Activated naive CD8-positive, alpha-beta T cell treated with anti-CD3 and anti-CD28 coated beads, Interleukin-2, amount 10 ng/mL, durations not matched to agents 7 days and 5 days (primary cell): ENCODE measurements at regions of chr2 and their contacts with region 1.

Region 1: GRCh38 chr2:127081826-127082633 is 24.9 kb downstream of the BIN1 start:
- DNase-seq: peak; percentile 87
- ATAC-seq: peak; percentile 75
- H3K4me3 Mint-ChIP-seq: peak overlapping the region; percentile 94
- H3K27ac Mint-ChIP-seq: peak overlapping the region; percentile 99
- H3K4me1 Mint-ChIP-seq: peaks cover 73% of the 10 kb centered on the region
- H3K27me3 Mint-ChIP-seq: no peaks in the 10 kb centered on the region

Region 2: GRCh38 chr2:127067620-127068350 is 14.2 kb before region 1 on chr2:
- POLR2A ChIA-PET with region 1: interaction called, 14 read pairs
- DNase-seq: peak; percentile 78
- ATAC-seq: peak; percentile 62
- H3K4me3 Mint-ChIP-seq: no peak overlapping the region
- H3K27ac Mint-ChIP-seq: peak overlapping the region; percentile 52
- H3K4me1 Mint-ChIP-seq: peaks cover 14% of the 10 kb centered on the region
- H3K27me3 Mint-ChIP-seq: no peaks in the 10 kb centered on the region

Region 3: DNA sequence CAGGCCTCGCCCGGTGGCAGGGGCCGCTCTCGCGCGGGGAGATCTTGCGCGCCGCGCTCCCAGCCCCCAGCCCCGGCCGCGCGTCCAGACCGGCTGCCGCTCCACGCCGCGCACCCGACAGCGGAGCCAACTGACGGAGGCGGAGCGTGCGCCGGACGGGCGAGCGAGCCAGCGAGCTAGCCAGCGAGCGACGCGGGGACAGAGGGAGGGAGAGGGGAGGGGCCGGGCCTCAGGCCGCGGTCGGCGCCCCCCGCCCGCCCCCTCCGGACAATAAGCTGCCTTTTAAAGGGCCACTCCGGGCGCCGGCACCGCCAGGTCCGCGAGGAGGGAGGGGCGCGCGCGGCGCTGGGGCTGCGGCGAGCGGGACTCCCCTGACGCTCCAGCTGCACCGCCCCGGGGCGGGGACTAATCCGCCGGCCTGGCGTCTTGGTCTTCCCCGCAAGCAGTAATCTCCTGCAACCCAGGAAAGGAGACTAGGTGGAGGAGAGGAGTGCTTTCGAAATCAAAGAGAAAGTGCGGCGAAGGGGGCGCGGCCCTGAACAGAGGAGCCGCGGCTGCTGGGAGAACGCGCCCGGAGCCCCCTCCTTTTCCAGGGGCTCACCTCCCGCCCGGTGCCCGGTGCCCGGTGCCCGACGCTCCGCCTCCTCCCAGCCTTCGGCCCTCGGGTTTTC is 25.1 kb after region 1 on chr2 and contains the start of gene BIN1:
- POLR2A ChIA-PET with region 1: interaction called, 14 read pairs
- DNase-seq: peak; percentile 81
- ATAC-seq: peak; percentile 91
- H3K4me3 Mint-ChIP-seq: peak within 1 kb of the TSS; percentile 84
- H3K27ac Mint-ChIP-seq: peak within 1 kb of the TSS; percentile 25
- H3K4me1 Mint-ChIP-seq: peaks cover 8% of the 10 kb centered on the region
- H3K27me3 Mint-ChIP-seq: peaks cover 26% of the 10 kb centered on the region
- total RNA-seq, gene BIN1: 160 to 161 TPM

Region 4: DNA sequence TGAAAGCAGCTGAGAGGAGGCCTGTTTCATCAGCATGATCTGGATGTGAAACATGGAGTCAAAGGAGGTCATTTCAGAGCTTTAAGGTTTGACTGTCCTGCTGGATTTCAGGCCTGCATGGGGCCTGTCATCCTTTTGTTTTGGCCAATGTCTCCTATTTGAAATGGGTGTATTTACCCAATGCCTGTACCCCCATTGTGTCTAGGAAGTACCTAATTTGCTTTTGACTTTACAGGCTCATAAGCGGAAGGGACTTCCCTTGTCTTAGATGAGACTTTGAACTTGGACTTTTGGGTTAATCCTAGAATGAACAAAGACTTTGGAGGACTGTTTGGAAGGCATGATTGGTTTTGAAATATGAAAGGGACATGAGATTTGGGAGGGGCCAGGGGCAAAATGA is 157.4 kb after region 1 on chr2:
- POLR2A ChIA-PET with region 1: no interaction called
- DNase-seq: no peak
- ATAC-seq: no peak
- H3K4me3 Mint-ChIP-seq: no peak overlapping the region
- H3K27ac Mint-ChIP-seq: no peak overlapping the region
- H3K4me1 Mint-ChIP-seq: no peaks in the 10 kb centered on the region
- H3K27me3 Mint-ChIP-seq: peaks cover 3% of the 10 kb centered on the region